Naive thymus-derived CD8-positive, alpha-beta T cell (primary cell): ENCODE measurements at regions of chr3 and their contacts with region 1.

Region 1: DNA sequence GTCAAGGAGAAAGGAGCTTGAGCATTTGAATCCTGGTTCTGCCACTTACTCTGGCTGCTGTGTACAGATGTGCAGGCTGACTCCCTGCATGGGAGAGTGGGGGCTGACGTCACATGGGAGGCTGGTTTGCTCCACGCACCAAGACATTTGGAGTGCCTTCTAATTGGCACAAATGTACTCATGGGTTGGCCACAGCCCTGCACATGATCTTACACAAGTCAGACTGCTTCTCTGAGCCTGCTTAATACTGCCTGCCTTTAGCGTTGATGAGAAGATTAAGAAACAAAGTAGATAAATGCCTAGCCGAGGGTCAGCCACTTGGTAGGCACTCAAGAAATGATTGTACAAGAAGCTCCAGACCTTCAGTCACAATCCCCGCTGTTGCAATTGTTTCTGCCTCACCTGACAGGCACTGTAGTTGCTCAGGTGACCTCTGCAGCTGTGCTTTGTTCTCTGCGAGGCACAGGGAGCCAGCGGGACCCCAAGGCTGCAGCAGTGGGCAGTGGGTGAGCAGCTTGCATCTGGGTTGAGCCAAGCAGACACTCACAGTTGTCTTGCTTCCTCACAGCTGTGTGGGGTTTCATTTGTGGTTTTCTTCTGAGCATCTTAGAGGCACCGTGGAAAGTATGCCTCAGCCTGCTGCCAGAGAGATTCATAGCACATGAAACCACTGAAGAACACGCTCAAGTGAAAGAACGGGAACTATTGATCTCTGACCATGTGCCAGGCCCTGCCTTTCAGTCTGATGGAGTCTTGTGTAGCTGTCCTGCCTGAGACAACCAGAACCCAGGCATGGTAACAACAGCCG is 33.1 kb downstream of the GRK7 start:
- DNase-seq: peak; percentile 17 to 80 (median 54)
- ATAC-seq: peak; percentile 76 to 83
- H3K4me3 Mint-ChIP-seq: peak overlapping the region; percentile 84 to 94 (median 90)
- H3K27ac Mint-ChIP-seq: peak overlapping the region; percentile 94 to 99 (median 97)
- H3K4me1 Mint-ChIP-seq: peaks cover 38 to 64% (median 58%) of the 10 kb centered on the region in 4 donors
- H3K27me3 Mint-ChIP-seq: no peaks in the 10 kb centered on the region

Region 2: DNA sequence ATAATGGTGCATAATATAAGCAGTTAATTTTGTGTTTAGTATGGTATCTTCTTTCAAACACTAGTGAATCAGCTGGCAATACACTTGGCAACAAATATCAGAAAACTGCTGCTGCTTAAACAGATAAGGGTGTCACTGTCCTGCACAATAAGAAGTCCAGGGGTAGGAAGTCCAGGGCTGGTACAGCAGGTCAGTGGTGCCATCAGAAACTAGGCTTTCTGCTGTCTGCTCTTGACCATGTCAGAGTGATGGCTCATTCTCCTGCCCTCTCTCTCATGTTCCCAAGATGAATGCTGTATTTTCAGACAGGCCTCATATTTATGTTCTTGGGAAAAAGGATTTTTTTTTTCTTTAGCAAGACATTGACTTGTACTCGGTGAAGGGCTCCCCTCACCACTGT is 42.3 kb before region 1 on chr3:
- POLR2A ChIA-PET with region 1: interaction called, 10 read pairs
- DNase-seq: no peak
- ATAC-seq: no peak
- H3K4me3 Mint-ChIP-seq: no peak overlapping the region
- H3K27ac Mint-ChIP-seq: peak overlapping the region in 3 of 10 donors; percentile 26 to 52 (median 43)
- H3K4me1 Mint-ChIP-seq: peaks cover 0 to 4% (median 0%) of the 10 kb centered on the region in 4 donors
- H3K27me3 Mint-ChIP-seq: no peaks in the 10 kb centered on the region

Region 3: DNA sequence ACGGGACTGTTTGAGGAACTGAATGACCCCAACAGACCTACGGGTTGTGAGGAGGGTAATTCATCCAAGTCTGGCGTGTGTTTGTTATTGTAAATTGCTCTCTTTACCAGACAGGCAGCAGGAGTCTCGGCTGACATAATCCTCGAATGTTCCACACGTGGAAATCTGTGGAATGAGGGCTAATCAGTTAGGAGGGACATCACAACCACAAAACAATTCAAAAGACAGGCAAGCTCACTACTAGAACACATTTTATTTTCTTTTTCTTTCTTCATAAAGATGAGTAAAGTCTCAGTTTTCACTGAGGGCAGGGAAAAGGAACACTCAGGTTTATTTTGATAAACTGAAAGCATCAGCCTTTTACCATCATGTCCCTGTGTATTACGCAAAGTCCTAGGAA is 20.7 kb after region 1 on chr3:
- POLR2A ChIA-PET with region 1: no interaction called
- DNase-seq: no peak
- ATAC-seq: no peak
- H3K4me3 Mint-ChIP-seq: no peak overlapping the region
- H3K27ac Mint-ChIP-seq: no peak overlapping the region
- H3K4me1 Mint-ChIP-seq: peaks cover 0 to 3% (median 0%) of the 10 kb centered on the region in 4 donors
- H3K27me3 Mint-ChIP-seq: peaks cover 0 to 9% (median 2%) of the 10 kb centered on the region in 5 donors

Region 4: GRCh38 chr3:141875374-141875892 is 79.1 kb after region 1 on chr3:
- POLR2A ChIA-PET with region 1: interaction called, 44 read pairs
- DNase-seq: peak; percentile 66 to 89 (median 78)
- ATAC-seq: peak; percentile 59 to 69
- H3K4me3 Mint-ChIP-seq: peak overlapping the region; percentile 84 to 96 (median 90)
- H3K27ac Mint-ChIP-seq: peak overlapping the region; percentile 86 to 98 (median 94)
- H3K4me1 Mint-ChIP-seq: peaks cover 9 to 37% (median 29%) of the 10 kb centered on the region in 4 donors
- H3K27me3 Mint-ChIP-seq: no peaks in the 10 kb centered on the region